ENCODE measurements at regions of chr6 and their contacts with region 1.

Region 1: GRCh38 chr6:26216356-26216885 is 129.2 kb downstream of the HFE start:
- DNase-seq: peak; percentile 88 to 96 (median 94)
- H3K4me3 ChIP-seq: peak overlapping the region; percentile 75 to 85
- H3K4me3 Mint-ChIP-seq: no peak overlapping the region
- H3K27ac ChIP-seq: peak overlapping the region; percentile 82
- H3K27ac Mint-ChIP-seq: no peak overlapping the region
- H3K4me1 ChIP-seq: peaks cover 26% of the 10 kb centered on the region
- H3K4me1 Mint-ChIP-seq: peaks cover 0 to 5% (median 2%) of the 10 kb centered on the region in 4 donors
- H3K27me3 ChIP-seq: no peaks in the 10 kb centered on the region
- H3K27me3 Mint-ChIP-seq: no peaks in the 10 kb centered on the region

Region 2: DNA sequence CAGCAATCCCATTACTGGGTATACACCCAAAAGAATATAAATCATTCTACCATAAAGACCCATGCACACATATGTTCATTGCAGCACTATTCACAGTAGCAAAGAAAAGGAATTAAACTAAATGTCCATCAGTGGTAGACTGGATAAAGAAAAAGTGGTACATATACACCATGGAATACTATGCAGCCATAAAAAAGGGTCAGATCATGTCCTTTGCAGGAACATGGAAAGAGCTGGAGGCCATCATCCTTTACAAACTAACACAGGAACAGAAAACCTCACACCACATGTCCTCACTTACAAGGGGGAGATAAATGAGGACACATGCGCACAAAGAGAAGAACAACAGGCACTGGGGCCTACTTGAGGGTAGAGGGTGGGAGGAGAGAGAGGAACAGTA is 1919.5 kb before region 1 on chr6:
- CTCF ChIA-PET with region 1: no interaction called
- POLR2A ChIA-PET with region 1: no interaction called
- intact Hi-C with region 1: no loop called
- DNase-seq: no peak
- H3K4me3 ChIP-seq: no peak overlapping the region
- H3K4me3 Mint-ChIP-seq: no peak overlapping the region
- H3K27ac ChIP-seq: no peak overlapping the region
- H3K27ac Mint-ChIP-seq: no peak overlapping the region
- H3K4me1 ChIP-seq: no peaks in the 10 kb centered on the region
- H3K4me1 Mint-ChIP-seq: no peaks in the 10 kb centered on the region
- H3K27me3 ChIP-seq: no peaks in the 10 kb centered on the region
- H3K27me3 Mint-ChIP-seq: peaks cover 7 to 11% of the 10 kb centered on the region in 2 donors

Region 3: GRCh38 chr6:26045065-26045927 is 171.1 kb before region 1 on chr6:
- CTCF ChIA-PET with region 1: no interaction called
- POLR2A ChIA-PET with region 1: interaction called, 45 read pairs
- intact Hi-C with region 1: no loop called
- DNase-seq: peak; percentile 88 to 91 (median 90)
- H3K4me3 ChIP-seq: peak overlapping the region; percentile 72 to 74
- H3K4me3 Mint-ChIP-seq: peak overlapping the region; percentile 88 to 98 (median 94)
- H3K27ac ChIP-seq: peak overlapping the region; percentile 76
- H3K27ac Mint-ChIP-seq: peak overlapping the region; percentile 93 to 99 (median 98)
- H3K4me1 ChIP-seq: peaks cover 14% of the 10 kb centered on the region
- H3K4me1 Mint-ChIP-seq: peaks cover 12 to 28% (median 20%) of the 10 kb centered on the region in 4 donors
- H3K27me3 ChIP-seq: no peaks in the 10 kb centered on the region
- H3K27me3 Mint-ChIP-seq: no peaks in the 10 kb centered on the region

Region 4: GRCh38 chr6:26175428-26176181 is 40.8 kb before region 1 on chr6:
- CTCF ChIA-PET with region 1: interaction called, 13 read pairs
- POLR2A ChIA-PET with region 1: interaction called, 111 read pairs
- intact Hi-C with region 1: loop called (anchors 1 kb)
- DNase-seq: peak; percentile 50 to 73 (median 70)
- H3K4me3 ChIP-seq: no peak overlapping the region
- H3K4me3 Mint-ChIP-seq: peak overlapping the region in 4 of 8 donors; percentile 37 to 70 (median 65)
- H3K27ac ChIP-seq: no peak overlapping the region
- H3K27ac Mint-ChIP-seq: peak overlapping the region; percentile 28 to 89 (median 78)
- H3K4me1 ChIP-seq: peaks cover 37% of the 10 kb centered on the region
- H3K4me1 Mint-ChIP-seq: peaks cover 21 to 40% (median 27%) of the 10 kb centered on the region in 4 donors
- H3K27me3 ChIP-seq: no peaks in the 10 kb centered on the region
- H3K27me3 Mint-ChIP-seq: no peaks in the 10 kb centered on the region

Region 5: DNA sequence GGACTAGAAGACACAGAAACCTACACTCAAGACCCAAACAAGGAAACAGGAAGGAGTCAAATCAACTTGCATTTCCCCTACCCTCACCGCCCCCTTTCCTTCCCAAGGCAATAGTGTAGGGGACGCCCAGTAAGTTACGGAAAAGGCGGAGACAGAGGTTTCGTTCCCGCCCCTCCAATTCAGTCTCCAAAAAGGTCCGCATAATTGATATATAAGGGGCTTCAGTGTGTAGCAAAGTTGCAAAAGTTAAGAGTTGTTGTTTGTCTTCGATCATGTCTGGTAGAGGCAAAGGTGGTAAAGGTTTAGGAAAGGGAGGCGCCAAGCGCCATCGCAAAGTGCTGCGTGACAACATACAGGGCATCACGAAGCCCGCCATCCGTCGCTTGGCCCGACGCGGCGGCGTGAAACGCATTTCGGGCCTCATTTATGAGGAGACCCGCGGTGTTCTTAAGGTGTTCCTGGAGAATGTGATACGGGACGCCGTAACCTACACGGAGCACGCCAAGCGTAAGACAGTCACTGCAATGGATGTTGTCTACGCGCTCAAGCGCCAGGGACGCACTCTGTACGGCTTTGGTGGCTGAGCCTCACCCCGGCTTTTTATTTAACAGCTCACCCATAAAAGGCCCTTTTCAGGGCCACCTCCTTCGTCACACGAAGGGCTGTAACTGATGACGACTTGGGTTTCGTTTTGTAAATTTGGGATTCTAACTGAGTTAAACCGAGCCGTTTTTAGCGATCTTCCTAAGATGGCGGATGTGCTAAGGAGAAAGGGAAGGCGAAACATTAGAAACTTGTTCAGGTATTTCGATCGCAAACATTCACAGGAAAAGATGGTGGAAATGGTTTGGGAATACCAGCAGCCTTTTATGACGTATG is 24.0 kb after region 1 on chr6:
- CTCF ChIA-PET with region 1: interaction called, 9 read pairs
- POLR2A ChIA-PET with region 1: interaction called, 951 read pairs
- intact Hi-C with region 1: no loop called
- DNase-seq: peak; percentile 79 to 86 (median 82)
- H3K4me3 ChIP-seq: peak overlapping the region; percentile 66 to 67
- H3K4me3 Mint-ChIP-seq: peak overlapping the region; percentile 80 to 93 (median 87)
- H3K27ac ChIP-seq: peak overlapping the region; percentile 81
- H3K27ac Mint-ChIP-seq: peak overlapping the region; percentile 89 to 99 (median 95)
- H3K4me1 ChIP-seq: peaks cover 11% of the 10 kb centered on the region
- H3K4me1 Mint-ChIP-seq: peaks cover 9 to 29% (median 15%) of the 10 kb centered on the region in 4 donors
- H3K27me3 ChIP-seq: no peaks in the 10 kb centered on the region
- H3K27me3 Mint-ChIP-seq: no peaks in the 10 kb centered on the region

Region 6: GRCh38 chr6:26322645-26323482 is 106.4 kb after region 1 on chr6:
- CTCF ChIA-PET with region 1: interaction called, 3 read pairs
- POLR2A ChIA-PET with region 1: interaction called, 18 read pairs
- intact Hi-C with region 1: no loop called
- DNase-seq: peak; percentile 75 to 80 (median 79)
- H3K4me3 ChIP-seq: peak overlapping the region in 1 of 2 donors; percentile 62
- H3K4me3 Mint-ChIP-seq: peak overlapping the region; percentile 86 to 92 (median 88)
- H3K27ac ChIP-seq: no peak overlapping the region
- H3K27ac Mint-ChIP-seq: peak overlapping the region; percentile 42 to 98 (median 82)
- H3K4me1 ChIP-seq: peaks cover 12% of the 10 kb centered on the region
- H3K4me1 Mint-ChIP-seq: peaks cover 19 to 30% (median 24%) of the 10 kb centered on the region in 4 donors
- H3K27me3 ChIP-seq: no peaks in the 10 kb centered on the region
- H3K27me3 Mint-ChIP-seq: peaks cover 8 to 22% of the 10 kb centered on the region in 2 donors

Region 7: GRCh38 chr6:26431258-26432172 is 215.1 kb after region 1 on chr6:
- CTCF ChIA-PET with region 1: no interaction called
- POLR2A ChIA-PET with region 1: no interaction called
- intact Hi-C with region 1: no loop called
- DNase-seq: no peak
- H3K4me3 ChIP-seq: no peak overlapping the region
- H3K4me3 Mint-ChIP-seq: no peak overlapping the region
- H3K27ac ChIP-seq: no peak overlapping the region
- H3K27ac Mint-ChIP-seq: no peak overlapping the region
- H3K4me1 ChIP-seq: no peaks in the 10 kb centered on the region
- H3K4me1 Mint-ChIP-seq: peaks cover 0 to 2% (median 0%) of the 10 kb centered on the region in 4 donors
- H3K27me3 ChIP-seq: no peaks in the 10 kb centered on the region
- H3K27me3 Mint-ChIP-seq: no peaks in the 10 kb centered on the region

Region 8: GRCh38 chr6:27809939-27810767 is 1593.7 kb after region 1 on chr6:
- CTCF ChIA-PET with region 1: no interaction called
- POLR2A ChIA-PET with region 1: interaction called, 20 read pairs
- intact Hi-C with region 1: no loop called
- DNase-seq: peak; percentile 85 to 94 (median 92)
- H3K4me3 ChIP-seq: peak overlapping the region; percentile 31 to 67
- H3K4me3 Mint-ChIP-seq: peak overlapping the region; percentile 92 to 99 (median 96)
- H3K27ac ChIP-seq: peak overlapping the region; percentile 79
- H3K27ac Mint-ChIP-seq: peak overlapping the region; percentile 94 to 98 (median 97)
- H3K4me1 ChIP-seq: peaks cover 49% of the 10 kb centered on the region
- H3K4me1 Mint-ChIP-seq: peaks cover 39 to 74% (median 50%) of the 10 kb centered on the region in 4 donors
- H3K27me3 ChIP-seq: no peaks in the 10 kb centered on the region
- H3K27me3 Mint-ChIP-seq: no peaks in the 10 kb centered on the region